ENCODE measurements at regions of chr5 and their contacts with region 1.

Region 1: GRCh38 chr5:139273572-139274289 is 19.8 kb upstream of the MATR3 start:
- DNase-seq: peak; percentile 89 to 91
- ATAC-seq: peak; percentile 97 to 99 (median 98)
- H3K4me3 ChIP-seq: peak overlapping the region; percentile 53
- H3K4me3 Mint-ChIP-seq: peak overlapping the region; percentile 88
- H3K27ac ChIP-seq: peak overlapping the region; percentile 30
- H3K27ac Mint-ChIP-seq: peak overlapping the region; percentile 81 to 86
- H3K4me1 ChIP-seq: peaks cover 24% of the 10 kb centered on the region
- H3K4me1 Mint-ChIP-seq: peaks cover 25 to 39% of the 10 kb centered on the region in 2 donors
- H3K27me3 ChIP-seq: no peaks in the 10 kb centered on the region
- H3K27me3 Mint-ChIP-seq: no peaks in the 10 kb centered on the region
- CTCF ChIP-seq: no peak

Region 2: DNA sequence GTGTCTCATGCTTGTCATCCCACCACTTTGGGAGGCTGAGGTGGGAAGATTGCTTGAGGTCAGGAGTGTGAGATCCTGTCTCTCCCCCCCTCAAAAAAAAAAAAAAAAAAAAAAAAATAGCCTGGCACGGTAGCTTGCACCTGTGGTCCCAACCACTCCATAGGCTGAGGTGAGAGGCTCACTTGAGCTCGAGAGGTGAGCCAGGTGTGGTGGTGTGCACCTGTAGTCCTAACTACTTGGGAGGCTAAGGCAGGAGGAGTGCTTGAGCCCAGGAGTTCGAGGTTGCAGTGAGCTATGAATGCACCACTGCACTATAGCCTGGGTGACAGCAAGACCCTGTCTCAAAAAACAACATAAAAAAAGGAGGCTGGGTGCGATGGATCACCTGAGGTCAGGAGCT is 721.0 kb before region 1 on chr5:
- intact Hi-C with region 1: no loop called
- DNase-seq: no peak
- ATAC-seq: no peak
- H3K4me3 ChIP-seq: no peak overlapping the region
- H3K4me3 Mint-ChIP-seq: no peak overlapping the region
- H3K27ac ChIP-seq: peak overlapping the region; percentile 11
- H3K27ac Mint-ChIP-seq: peak overlapping the region; percentile 31 to 65
- H3K4me1 ChIP-seq: peaks cover 11% of the 10 kb centered on the region
- H3K4me1 Mint-ChIP-seq: peaks cover 29 to 43% of the 10 kb centered on the region in 2 donors
- H3K27me3 ChIP-seq: no peaks in the 10 kb centered on the region
- H3K27me3 Mint-ChIP-seq: no peaks in the 10 kb centered on the region
- CTCF ChIP-seq: no peak

Region 3: GRCh38 chr5:139004374-139005307 is 269.1 kb before region 1 on chr5:
- intact Hi-C with region 1: no loop called
- DNase-seq: no peak
- ATAC-seq: no peak
- H3K4me3 ChIP-seq: no peak overlapping the region
- H3K4me3 Mint-ChIP-seq: no peak overlapping the region
- H3K27ac ChIP-seq: no peak overlapping the region
- H3K27ac Mint-ChIP-seq: no peak overlapping the region
- H3K4me1 ChIP-seq: no peaks in the 10 kb centered on the region
- H3K4me1 Mint-ChIP-seq: no peaks in the 10 kb centered on the region
- H3K27me3 ChIP-seq: no peaks in the 10 kb centered on the region
- H3K27me3 Mint-ChIP-seq: no peaks in the 10 kb centered on the region
- CTCF ChIP-seq: no peak

Region 4: DNA sequence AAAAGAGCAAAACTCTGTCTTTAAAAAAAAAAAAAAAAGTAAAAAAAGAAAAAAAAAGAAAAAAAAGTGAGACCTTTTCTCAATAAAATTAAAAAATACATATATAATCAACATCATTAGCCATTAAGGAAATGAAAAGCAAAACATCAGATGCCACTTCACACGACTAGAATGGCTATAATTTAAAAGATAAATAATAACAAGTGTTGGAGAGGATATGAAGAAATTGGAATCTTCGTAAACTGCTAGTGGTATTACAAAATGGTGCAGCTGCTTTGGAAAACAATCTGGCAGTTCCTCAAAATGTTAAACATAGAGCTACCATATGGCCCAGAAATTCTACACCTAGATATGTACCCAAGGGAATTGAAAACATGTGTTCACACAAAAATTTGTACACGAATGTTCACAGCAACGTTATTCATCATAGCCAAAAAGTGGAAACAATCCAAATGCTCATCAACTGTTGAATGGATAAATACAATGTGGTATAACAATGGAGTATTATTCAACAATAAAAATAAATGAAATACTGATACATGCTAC is 30.2 kb before region 1 on chr5:
- intact Hi-C with region 1: no loop called
- DNase-seq: no peak
- ATAC-seq: no peak
- H3K4me3 ChIP-seq: no peak overlapping the region
- H3K4me3 Mint-ChIP-seq: no peak overlapping the region
- H3K27ac ChIP-seq: no peak overlapping the region
- H3K27ac Mint-ChIP-seq: no peak overlapping the region
- H3K4me1 ChIP-seq: no peaks in the 10 kb centered on the region
- H3K4me1 Mint-ChIP-seq: peaks cover 0 to 6% of the 10 kb centered on the region in 2 donors
- H3K27me3 ChIP-seq: no peaks in the 10 kb centered on the region
- H3K27me3 Mint-ChIP-seq: peaks cover 16 to 25% of the 10 kb centered on the region in 2 donors
- CTCF ChIP-seq: no peak

Region 5: DNA sequence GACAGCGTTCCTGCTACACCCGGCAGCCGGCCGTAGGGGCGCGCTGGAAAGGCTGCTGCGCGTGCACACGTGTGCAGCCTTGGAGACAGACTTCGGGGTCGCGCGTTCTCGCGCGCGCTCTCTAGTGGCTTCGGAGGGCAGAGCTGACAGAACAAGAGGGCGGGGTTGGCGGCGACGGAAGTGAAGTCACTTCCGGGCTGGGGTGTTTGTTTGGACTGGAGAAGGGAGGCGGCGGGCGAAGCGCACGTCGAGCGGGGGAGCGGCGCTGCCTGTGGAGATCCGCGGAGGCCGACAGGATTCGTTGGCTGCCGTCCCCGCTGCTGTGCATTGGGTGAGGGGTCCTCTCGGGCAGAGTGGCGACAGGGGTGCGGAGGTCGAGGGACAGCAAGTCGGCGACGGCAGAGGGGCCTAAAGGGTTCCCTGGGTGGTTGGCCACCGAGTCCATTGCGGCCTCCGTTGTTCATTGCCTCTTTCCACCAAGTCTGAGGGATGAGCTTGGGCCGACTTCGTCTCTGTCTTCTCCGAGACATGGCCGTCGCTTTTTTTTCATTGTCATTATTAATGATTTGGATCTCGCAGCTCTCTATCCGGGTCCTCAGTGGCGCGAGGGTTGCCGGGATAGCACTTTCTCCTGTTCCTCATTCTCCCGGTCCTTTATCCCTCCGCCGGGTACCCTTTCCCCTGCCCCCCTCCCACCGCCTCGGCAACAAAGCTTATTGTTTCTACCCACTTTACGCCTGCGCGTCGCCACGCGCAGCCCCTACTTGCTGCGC is 68.1 kb after region 1 on chr5 and contains the start of gene PAIP2:
- intact Hi-C with region 1: loop called (anchors 5 kb)
- DNase-seq: peak; percentile 96 to 99
- ATAC-seq: peak; percentile 88 to 97 (median 92)
- H3K4me3 ChIP-seq: peak within 1 kb of the TSS; percentile 91
- H3K4me3 Mint-ChIP-seq: peak within 1 kb of the TSS; percentile 96
- H3K27ac ChIP-seq: peak within 1 kb of the TSS; percentile 97
- H3K27ac Mint-ChIP-seq: peak within 1 kb of the TSS; percentile 95 to 98
- H3K4me1 ChIP-seq: peaks cover 21% of the 10 kb centered on the region
- H3K4me1 Mint-ChIP-seq: peaks cover 41 to 47% of the 10 kb centered on the region in 2 donors
- H3K27me3 ChIP-seq: no peaks in the 10 kb centered on the region
- H3K27me3 Mint-ChIP-seq: no peaks in the 10 kb centered on the region
- CTCF ChIP-seq: peak; percentile 67
- total RNA-seq, gene PAIP2: 105 to 126 (median 110) TPM